ENCODE measurements at regions of chr9 and their contacts with region 1.

Region 1: DNA sequence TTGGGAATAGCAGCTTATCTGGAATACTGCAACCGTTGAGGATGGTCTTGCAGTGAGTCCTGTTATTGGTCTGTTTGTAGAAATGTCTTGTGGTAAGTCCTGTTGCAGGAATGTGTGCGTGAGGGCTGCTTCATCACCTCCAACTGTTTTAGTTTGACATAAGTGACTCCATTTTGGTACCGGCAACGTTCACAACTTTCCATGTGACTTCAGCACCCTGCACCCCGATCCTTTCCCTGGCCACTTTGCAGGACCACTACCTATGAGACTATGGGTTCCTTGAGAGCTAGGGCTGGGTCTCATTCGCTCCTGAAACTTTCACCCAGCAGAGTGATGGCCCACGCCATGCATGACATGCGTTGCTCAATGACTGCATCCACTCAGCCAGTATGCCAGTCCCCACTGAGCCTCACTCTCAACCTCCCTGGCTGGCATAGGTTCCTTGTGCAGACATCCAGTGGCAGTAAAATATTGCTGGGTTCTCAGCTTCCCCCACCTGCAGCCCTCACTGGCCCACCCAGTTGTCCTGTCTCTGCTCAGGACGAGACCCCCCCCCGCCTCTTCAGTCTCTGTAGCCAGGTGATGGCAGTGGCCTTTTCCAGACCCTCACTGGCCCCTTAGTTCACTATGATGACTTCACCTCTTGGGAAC is 8.0 kb downstream of the SURF6 start:
- DNase-seq: no peak
- ATAC-seq: no peak
- H3K4me3 ChIP-seq: no peak overlapping the region
- H3K27ac ChIP-seq: no peak overlapping the region
- H3K4me1 ChIP-seq: peaks cover 0 to 5% of the 10 kb centered on the region in 2 experiments; a peak in 2 of 4 replicates
- H3K27me3 ChIP-seq: no peaks in the 10 kb centered on the region
- CTCF ChIP-seq: no peak
- POLR2A ChIP-seq: no peak
- RAD21 ChIP-seq: no peak

Region 2: DNA sequence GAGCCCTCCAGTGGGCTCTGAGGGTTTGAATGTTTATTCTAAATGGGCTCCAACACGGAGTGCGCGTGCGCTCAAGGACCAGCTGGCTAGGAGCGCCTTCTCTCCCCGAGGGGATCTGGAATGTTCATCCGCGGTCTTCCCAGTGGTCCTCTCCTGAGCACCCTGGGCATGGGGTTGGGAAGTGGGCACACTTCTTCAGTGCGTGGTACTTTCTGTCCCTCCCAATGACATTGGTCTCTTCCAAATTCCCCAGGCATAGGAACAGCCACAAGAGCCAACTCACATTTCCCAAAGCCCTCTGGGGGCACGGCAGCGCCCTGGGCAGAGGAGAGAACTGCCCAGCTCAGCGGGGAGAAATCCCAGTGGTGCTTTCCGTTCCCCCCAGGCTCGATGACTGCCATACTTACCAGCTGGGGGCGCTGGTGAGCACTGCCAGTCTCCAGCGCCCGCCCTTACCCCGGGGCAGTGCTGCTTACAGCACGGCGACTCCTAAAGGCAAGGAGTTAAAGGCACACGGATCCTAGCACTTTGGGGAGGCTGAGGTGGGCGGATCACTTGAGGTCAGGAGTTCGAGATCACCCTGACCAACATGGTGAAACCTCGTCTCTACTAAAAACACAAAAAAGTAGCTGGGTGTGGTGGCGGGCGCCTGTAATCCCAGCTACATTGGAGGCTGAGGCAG is 89.0 kb before region 1 on chr9:
- CTCF ChIA-PET with region 1: interaction called, 13 read pairs
- POLR2A ChIA-PET with region 1: interaction called, 4 read pairs
- RAD21 ChIA-PET with region 1: interaction called in 1 of 2 experiments, 4 read pairs
- intact Hi-C with region 1: loop called (anchors 2 kb)
- DNase-seq: peak; percentile 88
- ATAC-seq: peak; percentile 88
- H3K4me3 ChIP-seq: peak overlapping the region; percentile 38 to 57
- H3K27ac ChIP-seq: peak overlapping the region; percentile 79
- H3K4me1 ChIP-seq: peaks cover 16 to 19% of the 10 kb centered on the region in 2 experiments; a peak in 3 of 4 replicates
- H3K27me3 ChIP-seq: no peaks in the 10 kb centered on the region
- CTCF ChIP-seq: peak; percentile 92 to 99 (median 96)
- POLR2A ChIP-seq: no peak
- RAD21 ChIP-seq: peak; percentile 80

Region 3: GRCh38 chr9:133252301-133252780 is 75.6 kb before region 1 on chr9:
- CTCF ChIA-PET with region 1: no interaction called
- POLR2A ChIA-PET with region 1: no interaction called
- RAD21 ChIA-PET with region 1: no interaction called
- intact Hi-C with region 1: loop called (anchors 5 kb)
- DNase-seq: peak; percentile 27
- ATAC-seq: peak; percentile 85
- H3K4me3 ChIP-seq: peak overlapping the region; percentile 25 to 35
- H3K27ac ChIP-seq: peak overlapping the region; percentile 61
- H3K4me1 ChIP-seq: peaks cover 31 to 36% of the 10 kb centered on the region in 2 experiments
- H3K27me3 ChIP-seq: no peaks in the 10 kb centered on the region
- CTCF ChIP-seq: no peak
- POLR2A ChIP-seq: no peak
- RAD21 ChIP-seq: no peak

Region 4: GRCh38 chr9:133589454-133590227 is 261.7 kb after region 1 on chr9:
- CTCF ChIA-PET with region 1: no interaction called
- POLR2A ChIA-PET with region 1: no interaction called
- RAD21 ChIA-PET with region 1: no interaction called
- intact Hi-C with region 1: no loop called
- DNase-seq: peak; percentile 40
- ATAC-seq: peak; percentile 88
- H3K4me3 ChIP-seq: no peak overlapping the region
- H3K27ac ChIP-seq: no peak overlapping the region
- H3K4me1 ChIP-seq: peaks cover 3 to 18% of the 10 kb centered on the region in 2 experiments
- H3K27me3 ChIP-seq: no peaks in the 10 kb centered on the region
- CTCF ChIP-seq: peak; percentile 22 to 99 (median 97); a peak in 5 of 6 replicates
- POLR2A ChIP-seq: no peak
- RAD21 ChIP-seq: no peak; the same call in 1 of the 2 replicates

Region 5: DNA sequence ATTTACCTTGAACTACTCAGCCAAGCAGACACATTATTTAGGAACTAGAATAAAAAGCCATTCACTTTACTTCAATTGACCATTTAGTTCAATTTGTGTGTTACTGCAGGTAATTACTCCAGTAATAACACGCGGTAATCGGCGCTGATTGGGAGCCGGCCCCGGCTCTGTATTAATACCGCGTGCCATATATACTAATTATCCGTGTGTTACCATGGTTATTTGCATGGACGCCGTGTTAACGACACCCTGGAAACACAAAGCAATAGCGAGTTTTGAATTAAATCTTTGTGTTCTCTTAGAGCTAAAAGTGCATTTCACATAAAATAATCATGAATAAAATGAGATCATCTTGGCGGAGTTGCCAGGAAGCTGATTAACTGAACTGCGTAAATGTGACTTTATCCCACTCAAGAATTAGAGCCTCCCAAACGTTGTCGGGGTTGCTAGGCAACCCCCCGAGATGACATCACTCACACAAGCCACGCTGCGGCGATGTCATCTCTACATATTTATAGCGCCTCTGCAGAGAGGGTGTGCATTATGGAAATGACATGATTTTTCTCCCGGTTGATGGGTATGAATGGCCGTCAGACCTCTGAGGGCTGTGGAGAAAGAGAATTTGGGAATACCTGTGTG is 877.8 kb after region 1 on chr9:
- CTCF ChIA-PET with region 1: no interaction called
- POLR2A ChIA-PET with region 1: no interaction called
- RAD21 ChIA-PET with region 1: no interaction called
- intact Hi-C with region 1: no loop called
- DNase-seq: no peak
- ATAC-seq: no peak
- H3K4me3 ChIP-seq: no peak overlapping the region
- H3K27ac ChIP-seq: no peak overlapping the region
- H3K4me1 ChIP-seq: no peaks in the 10 kb centered on the region
- H3K27me3 ChIP-seq: no peaks in the 10 kb centered on the region
- CTCF ChIP-seq: no peak
- POLR2A ChIP-seq: no peak
- RAD21 ChIP-seq: no peak